GM23248 (cell line): ENCODE measurements at regions of chr11 and their contacts with region 1.

Region 1: GRCh38 chr11:103682318-103683184 is 353.9 kb upstream of the DDI1 start:
- DNase-seq: peak; percentile 80
- H3K4me3 ChIP-seq: peak overlapping the region; percentile 20; the same call in 1 of the 2 replicates
- H3K27ac ChIP-seq: no peak overlapping the region
- H3K4me1 ChIP-seq: peaks cover 12% of the 10 kb centered on the region
- H3K27me3 ChIP-seq: no peaks in the 10 kb centered on the region

Region 2: GRCh38 chr11:103947546-103947919 is 265.0 kb after region 1 on chr11:
- in situ Hi-C with region 1: no loop called
- DNase-seq: peak; percentile 82
- H3K4me3 ChIP-seq: 0 out of 2 replicates have a peak overlapping the region, but pooled peaks have one; percentile 5
- H3K27ac ChIP-seq: peak overlapping the region; percentile 9; the same call in 1 of the 2 replicates
- H3K4me1 ChIP-seq: peaks cover 27% of the 10 kb centered on the region
- H3K27me3 ChIP-seq: no peaks in the 10 kb centered on the region

Region 3: DNA sequence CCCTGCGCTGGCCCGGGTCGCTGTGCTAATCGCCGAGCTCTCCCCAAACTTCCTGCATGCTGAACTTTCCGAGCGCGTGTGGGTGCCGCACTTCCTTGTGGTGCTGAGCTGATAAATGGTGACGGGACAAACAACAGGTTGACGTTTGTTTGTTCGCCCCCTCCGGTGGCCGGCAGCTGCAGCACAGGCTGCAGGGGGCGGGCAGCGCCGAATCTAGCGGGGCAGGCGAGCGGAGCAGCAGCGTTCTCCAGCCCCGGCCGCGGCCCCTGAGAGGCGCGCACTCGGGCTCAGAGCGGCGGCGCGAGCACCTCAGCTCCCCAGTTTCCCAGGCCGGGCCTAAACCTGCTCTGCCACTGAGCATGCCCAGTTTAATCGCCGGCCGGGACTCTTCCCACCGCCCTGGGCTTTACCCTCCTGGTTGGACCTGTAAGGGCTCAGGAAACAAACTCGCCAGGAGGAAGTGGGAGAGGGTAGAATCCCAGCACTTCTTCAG is 481.5 kb after region 1 on chr11 and contains the start of gene PDGFD:
- in situ Hi-C with region 1: loop called (anchors 10 kb)
- DNase-seq: peak; percentile 64
- H3K4me3 ChIP-seq: peak within 1 kb of the TSS; percentile 75
- H3K27ac ChIP-seq: no peak within 1 kb of the TSS
- H3K4me1 ChIP-seq: no peaks in the 10 kb centered on the region
- H3K27me3 ChIP-seq: no peaks in the 10 kb centered on the region
- total RNA-seq, gene PDGFD: 0.25 and 1.3 TPM in 2 replicates

Region 4: GRCh38 chr11:104343578-104343977 is 661.0 kb after region 1 on chr11:
- in situ Hi-C with region 1: loop called (anchors 25 kb)
- DNase-seq: peak; percentile 24
- H3K4me3 ChIP-seq: no peak overlapping the region
- H3K27ac ChIP-seq: no peak overlapping the region
- H3K4me1 ChIP-seq: no peaks in the 10 kb centered on the region
- H3K27me3 ChIP-seq: no peaks in the 10 kb centered on the region